ENCODE measurements at regions of chr3 and their contacts with region 1.

Region 1: DNA sequence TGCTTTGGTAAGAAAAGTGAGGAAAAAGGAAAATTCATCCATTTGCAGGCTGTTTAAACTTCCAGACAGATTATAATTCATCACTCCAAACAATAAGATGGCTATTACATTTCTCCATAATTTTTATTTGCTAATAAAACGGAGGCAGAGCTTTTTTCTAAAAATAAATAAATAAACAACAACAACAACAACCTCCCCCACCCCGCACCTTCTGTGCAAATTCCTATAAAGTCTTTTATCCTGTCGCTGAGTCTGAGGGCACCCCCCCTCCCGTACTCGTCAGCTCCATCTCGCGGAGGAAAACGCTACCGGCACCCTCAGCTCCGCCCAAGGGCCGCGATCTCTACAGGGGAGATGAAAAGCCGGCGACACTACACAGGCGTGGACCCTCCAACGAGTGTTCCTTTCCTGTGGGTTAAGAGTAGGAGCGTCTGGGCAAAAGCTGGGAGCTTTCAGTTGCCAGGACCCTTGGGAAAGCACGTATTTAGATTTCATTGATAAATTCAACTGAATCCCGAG is 1.0 kb upstream of the ATP1B3 start:
- DNase-seq: peak; percentile 65 to 91
- H3K4me3 ChIP-seq: peak overlapping the region; percentile 97 to 98
- H3K27ac ChIP-seq: peak overlapping the region; percentile 99 to 100
- H3K4me1 ChIP-seq: peaks cover 0 to 11% of the 10 kb centered on the region in 2 donors
- H3K27me3 ChIP-seq: no peaks in the 10 kb centered on the region
- CTCF ChIP-seq: peak; percentile 77 to 94 (median 93)

Region 2: DNA sequence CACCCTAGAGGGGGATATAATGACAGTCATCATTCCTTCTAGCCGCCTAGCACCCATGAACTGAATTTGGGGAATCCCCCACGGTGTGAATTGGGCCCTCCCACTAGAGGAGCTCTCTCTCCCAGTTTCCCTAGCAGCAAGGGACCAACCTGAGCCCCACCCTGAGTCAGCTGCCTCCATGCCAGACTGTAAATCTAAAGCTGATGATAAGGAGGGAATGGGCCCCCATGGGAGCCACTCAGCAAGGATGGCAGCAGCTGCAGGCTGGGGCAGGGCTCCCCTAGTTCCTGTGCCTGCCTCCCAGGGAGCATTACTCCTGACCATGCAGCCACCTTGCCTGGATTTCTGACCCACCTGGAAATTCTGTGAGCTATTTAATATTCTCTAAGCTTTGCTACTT is 700.8 kb before region 1 on chr3:
- intact Hi-C with region 1: no loop called
- DNase-seq: no peak
- H3K4me3 ChIP-seq: no peak overlapping the region
- H3K27ac ChIP-seq: no peak overlapping the region
- H3K4me1 ChIP-seq: no peaks in the 10 kb centered on the region
- H3K27me3 ChIP-seq: no peaks in the 10 kb centered on the region
- CTCF ChIP-seq: no peak

Region 3: DNA sequence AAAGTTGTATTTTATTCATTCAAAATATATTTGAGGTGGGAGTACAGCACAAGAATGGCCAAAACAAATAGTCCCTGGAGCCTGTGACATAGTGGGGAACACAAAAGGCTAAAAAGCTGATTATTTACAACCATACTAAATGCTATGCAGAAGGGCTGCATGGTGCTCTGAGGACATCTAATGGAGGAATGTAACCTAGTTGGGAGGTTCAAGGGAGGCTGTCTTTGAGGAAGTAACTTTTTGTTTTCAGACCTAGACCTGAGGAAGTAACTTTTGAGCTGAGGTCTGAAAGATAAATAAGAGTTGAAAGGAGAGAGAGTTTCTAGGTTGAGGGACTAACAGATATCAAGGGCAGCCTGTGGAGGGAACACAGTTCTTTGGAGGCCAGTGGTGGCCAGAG is 423.4 kb before region 1 on chr3:
- intact Hi-C with region 1: loop called (anchors 10 kb)
- DNase-seq: no peak
- H3K4me3 ChIP-seq: no peak overlapping the region
- H3K27ac ChIP-seq: peak overlapping the region; percentile 20 to 27
- H3K4me1 ChIP-seq: peaks cover 0 to 26% of the 10 kb centered on the region in 2 donors
- H3K27me3 ChIP-seq: no peaks in the 10 kb centered on the region
- CTCF ChIP-seq: peak; percentile 66 to 86 (median 73)

Region 4: GRCh38 chr3:141575879-141576743 is 299.3 kb before region 1 on chr3:
- intact Hi-C with region 1: loop called (anchors 10 kb)
- DNase-seq: no peak
- H3K4me3 ChIP-seq: peak overlapping the region in 1 of 2 donors; percentile 13
- H3K27ac ChIP-seq: no peak overlapping the region
- H3K4me1 ChIP-seq: no peaks in the 10 kb centered on the region
- H3K27me3 ChIP-seq: no peaks in the 10 kb centered on the region
- CTCF ChIP-seq: peak; percentile 25 to 59 (median 54)

Region 5: GRCh38 chr3:141928626-141929270 is 53.3 kb after region 1 on chr3:
- intact Hi-C with region 1: no loop called
- DNase-seq: no peak
- H3K4me3 ChIP-seq: no peak overlapping the region
- H3K27ac ChIP-seq: no peak overlapping the region
- H3K4me1 ChIP-seq: no peaks in the 10 kb centered on the region
- H3K27me3 ChIP-seq: no peaks in the 10 kb centered on the region
- CTCF ChIP-seq: no peak

Region 6: DNA sequence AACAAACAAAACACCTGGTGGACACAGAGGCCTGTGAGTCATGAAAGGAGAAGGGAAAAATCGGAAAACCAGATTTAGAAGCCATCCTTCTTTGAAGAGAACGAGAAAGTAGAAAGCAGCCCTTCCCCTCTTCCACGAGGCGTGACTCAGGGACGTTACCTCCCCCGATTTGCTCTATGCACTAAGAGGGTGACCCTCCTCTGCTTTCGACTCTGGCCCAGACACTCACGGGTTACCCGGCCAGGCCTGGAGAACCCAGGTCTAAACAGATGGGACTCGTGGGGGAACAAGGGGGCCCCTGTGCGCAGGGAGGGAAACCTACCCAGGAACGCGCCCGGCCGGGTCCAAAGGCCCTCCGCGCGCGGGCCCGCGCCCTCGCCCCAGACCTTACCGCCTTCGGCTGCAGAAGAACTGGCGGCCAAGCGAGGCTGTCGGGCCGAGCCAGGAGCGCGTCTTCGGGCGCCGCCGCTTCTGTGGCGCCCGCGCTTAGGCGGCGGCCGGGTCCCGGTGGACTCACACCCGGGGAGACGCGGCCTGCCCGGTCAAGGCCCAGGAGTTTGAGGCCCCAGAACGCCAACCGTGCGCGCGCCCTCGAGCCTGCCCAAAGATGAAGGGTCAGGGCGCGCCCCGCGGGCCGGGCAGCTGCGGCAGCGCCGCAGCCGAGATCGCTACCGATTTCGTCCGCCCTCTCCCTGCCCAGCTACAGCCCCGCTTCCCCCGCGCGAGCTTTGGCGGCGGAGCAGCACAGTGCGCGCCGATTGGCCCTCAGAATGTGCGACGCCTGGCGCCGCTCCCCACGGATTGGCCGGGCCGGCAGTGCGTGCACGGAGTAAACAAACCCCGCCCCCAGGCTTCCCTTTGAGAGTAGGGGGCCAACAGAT is 273.6 kb after region 1 on chr3 and contains the start of gene TFDP2:
- intact Hi-C with region 1: loop called (anchors 5 kb)
- DNase-seq: peak; percentile 52 to 94
- H3K4me3 ChIP-seq: peak within 1 kb of the TSS; percentile 76 to 90
- H3K27ac ChIP-seq: peak within 1 kb of the TSS; percentile 86 to 94
- H3K4me1 ChIP-seq: peaks cover 0 to 10% of the 10 kb centered on the region in 2 donors
- H3K27me3 ChIP-seq: no peaks in the 10 kb centered on the region
- CTCF ChIP-seq: no peak
- total RNA-seq, gene TFDP2: 23.0 TPM

Region 7: GRCh38 chr3:142279965-142280590 is 404.6 kb after region 1 on chr3:
- intact Hi-C with region 1: loop called (anchors 5 kb)
- DNase-seq: peak in 1 of 2 donors; percentile 71
- H3K4me3 ChIP-seq: no peak overlapping the region
- H3K27ac ChIP-seq: no peak overlapping the region
- H3K4me1 ChIP-seq: peaks cover 5 to 23% of the 10 kb centered on the region in 2 donors
- H3K27me3 ChIP-seq: no peaks in the 10 kb centered on the region
- CTCF ChIP-seq: peak; percentile 50 to 70 (median 63)

Measured in ascending aorta (tissue), 2 donors.